ENCODE measurements at regions of chr17 and their contacts with region 1.

Region 1: GRCh38 chr17:7989781-7990655 is 12.4 kb upstream of the GUCY2D start:
- DNase-seq: peak; percentile 93
- ATAC-seq: peak; percentile 87
- H3K4me3 Mint-ChIP-seq: peak overlapping the region; percentile 69
- H3K27ac Mint-ChIP-seq: peak overlapping the region; percentile 88
- H3K4me1 Mint-ChIP-seq: peaks cover 25% of the 10 kb centered on the region
- H3K27me3 Mint-ChIP-seq: peaks cover 22% of the 10 kb centered on the region

Region 2: GRCh38 chr17:7745748-7746470 is 244.1 kb before region 1 on chr17:
- CTCF ChIA-PET with region 1: interaction called, 19 read pairs
- DNase-seq: no peak
- ATAC-seq: no peak
- H3K4me3 Mint-ChIP-seq: no peak overlapping the region
- H3K27ac Mint-ChIP-seq: no peak overlapping the region
- H3K4me1 Mint-ChIP-seq: no peaks in the 10 kb centered on the region
- H3K27me3 Mint-ChIP-seq: peaks cover 30% of the 10 kb centered on the region

Region 3: GRCh38 chr17:7856883-7857723 is 132.9 kb before region 1 on chr17 and contains the start of gene NAA38:
- CTCF ChIA-PET with region 1: interaction called, 107 read pairs
- DNase-seq: peak; percentile 99
- ATAC-seq: peak; percentile 88
- H3K4me3 Mint-ChIP-seq: no peak within 1 kb of the TSS
- H3K27ac Mint-ChIP-seq: no peak within 1 kb of the TSS
- H3K4me1 Mint-ChIP-seq: peaks cover 18% of the 10 kb centered on the region
- H3K27me3 Mint-ChIP-seq: no peaks in the 10 kb centered on the region
- total RNA-seq, gene NAA38: 86.0 to 95.8 TPM

Region 4: GRCh38 chr17:7905421-7905820 is 84.6 kb before region 1 on chr17:
- CTCF ChIA-PET with region 1: interaction called, 312 read pairs
- DNase-seq: no peak
- ATAC-seq: no peak
- H3K4me3 Mint-ChIP-seq: no peak overlapping the region
- H3K27ac Mint-ChIP-seq: no peak overlapping the region
- H3K4me1 Mint-ChIP-seq: no peaks in the 10 kb centered on the region
- H3K27me3 Mint-ChIP-seq: no peaks in the 10 kb centered on the region

Region 5: GRCh38 chr17:7944326-7944725 is 45.7 kb before region 1 on chr17:
- CTCF ChIA-PET with region 1: interaction called, 130 read pairs
- DNase-seq: no peak
- ATAC-seq: no peak
- H3K4me3 Mint-ChIP-seq: no peak overlapping the region
- H3K27ac Mint-ChIP-seq: no peak overlapping the region
- H3K4me1 Mint-ChIP-seq: peaks cover 1% of the 10 kb centered on the region
- H3K27me3 Mint-ChIP-seq: no peaks in the 10 kb centered on the region

Region 6: DNA sequence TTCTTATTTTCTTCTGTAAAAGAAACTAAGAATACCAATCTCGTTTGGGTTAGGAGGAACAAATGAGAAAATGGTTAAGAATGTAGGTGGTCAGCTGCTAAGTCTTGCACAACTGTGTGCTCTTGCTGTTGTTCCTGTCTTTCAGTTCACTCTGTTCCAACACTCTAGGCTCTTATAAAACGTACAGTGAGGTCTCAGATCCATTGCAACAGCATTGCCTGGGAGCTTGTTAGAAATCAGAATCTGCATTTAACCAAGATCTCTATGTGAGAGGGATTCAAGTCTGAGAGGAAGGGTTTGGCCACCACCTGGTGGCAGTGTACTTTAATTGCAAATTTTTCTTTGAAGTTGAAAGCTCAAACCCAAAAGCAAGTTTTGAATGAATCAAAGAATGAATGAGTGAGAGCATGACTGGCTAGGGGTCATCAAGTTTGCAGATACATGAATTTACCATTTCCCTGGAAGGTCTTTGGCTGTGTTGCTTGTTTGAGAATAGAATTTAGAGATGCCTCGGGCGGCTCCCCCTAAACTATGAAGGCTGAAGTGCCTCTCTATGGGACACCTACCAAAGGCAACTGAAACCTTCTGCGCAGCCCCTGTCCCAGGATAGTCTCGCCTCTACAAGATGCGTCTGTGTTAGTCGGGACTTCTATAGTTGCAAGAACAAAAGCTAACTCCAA is 51.4 kb after region 1 on chr17:
- CTCF ChIA-PET with region 1: interaction called, 18 read pairs
- DNase-seq: peak; percentile 62
- ATAC-seq: peak; percentile 57
- H3K4me3 Mint-ChIP-seq: no peak overlapping the region
- H3K27ac Mint-ChIP-seq: no peak overlapping the region
- H3K4me1 Mint-ChIP-seq: peaks cover 4% of the 10 kb centered on the region
- H3K27me3 Mint-ChIP-seq: peaks cover 34% of the 10 kb centered on the region

Region 7: GRCh38 chr17:8125157-8125946 is 135.3 kb after region 1 on chr17:
- CTCF ChIA-PET with region 1: no interaction called
- DNase-seq: peak; percentile 92
- ATAC-seq: peak; percentile 24
- H3K4me3 Mint-ChIP-seq: peak overlapping the region; percentile 95
- H3K27ac Mint-ChIP-seq: peak overlapping the region; percentile 80
- H3K4me1 Mint-ChIP-seq: peaks cover 56% of the 10 kb centered on the region
- H3K27me3 Mint-ChIP-seq: peaks cover 46% of the 10 kb centered on the region